ENCODE measurements at regions of chr12 and their contacts with region 1.

Region 1: DNA sequence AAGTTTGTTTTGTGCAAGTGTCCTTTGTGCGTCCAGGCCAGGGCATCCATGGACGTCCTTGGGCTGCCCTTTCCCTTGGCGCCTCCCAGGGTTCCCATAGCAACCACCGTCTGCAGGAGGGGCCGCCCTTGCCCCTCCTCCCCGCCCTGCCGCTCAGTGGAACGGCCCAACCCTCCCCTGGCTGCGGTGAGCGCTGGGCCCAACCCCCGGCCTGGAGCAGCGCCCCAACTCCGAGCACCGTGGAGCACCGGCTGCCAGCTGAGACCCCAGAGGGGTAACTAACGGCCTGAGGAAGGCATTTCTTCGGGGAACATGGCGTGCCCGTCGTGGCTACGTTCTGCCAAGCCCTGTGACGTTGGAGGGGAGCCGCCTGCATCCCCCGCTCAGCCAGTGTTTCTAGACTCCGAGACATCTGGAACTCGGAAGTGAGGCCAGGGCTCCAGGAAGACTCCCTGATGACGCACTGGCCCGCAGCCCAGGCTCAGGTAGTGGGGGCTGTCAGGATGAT is 5.3 kb upstream of the ACACB start:
- DNase-seq: peak; percentile 83 to 96
- H3K4me3 ChIP-seq: peak overlapping the region; percentile 39
- CTCF ChIP-seq: no peak
- POLR2A ChIP-seq: peak in 1 of 2 donors; percentile 46

Region 2: GRCh38 chr12:109222496-109222895 is 111.5 kb after region 1 on chr12:
- intact Hi-C with region 1: no loop called
- DNase-seq: no peak
- H3K4me3 ChIP-seq: no peak overlapping the region
- CTCF ChIP-seq: no peak
- POLR2A ChIP-seq: no peak

Region 3: GRCh38 chr12:109393437-109394345 is 282.6 kb after region 1 on chr12:
- intact Hi-C with region 1: loop called (anchors 5 kb)
- DNase-seq: peak in 1 of 2 donors; percentile 27
- H3K4me3 ChIP-seq: no peak overlapping the region
- CTCF ChIP-seq: no peak
- POLR2A ChIP-seq: no peak